Heart left ventricle (tissue), 16 donors: ENCODE measurements at regions of chr2 and their contacts with region 1.

Region 1: GRCh38 chr2:19347619-19348562 is 10.5 kb downstream of the OSR1 start:
- DNase-seq: peak; percentile 91 to 96 (median 95)
- ATAC-seq: peak; percentile 96 to 98 (median 98)
- H3K4me3 ChIP-seq: peak overlapping the region; percentile 62 to 96 (median 81)
- H3K27ac ChIP-seq: peak overlapping the region; percentile 78 to 99 (median 94)
- H3K4me1 ChIP-seq: peaks cover 0 to 31% (median 14%) of the 10 kb centered on the region in 12 donors
- H3K27me3 ChIP-seq: peaks cover 0 to 34% (median 7%) of the 10 kb centered on the region in 9 donors
- CTCF ChIP-seq: no peak
- POLR2A ChIP-seq: peak; percentile 64 to 96

Region 2: DNA sequence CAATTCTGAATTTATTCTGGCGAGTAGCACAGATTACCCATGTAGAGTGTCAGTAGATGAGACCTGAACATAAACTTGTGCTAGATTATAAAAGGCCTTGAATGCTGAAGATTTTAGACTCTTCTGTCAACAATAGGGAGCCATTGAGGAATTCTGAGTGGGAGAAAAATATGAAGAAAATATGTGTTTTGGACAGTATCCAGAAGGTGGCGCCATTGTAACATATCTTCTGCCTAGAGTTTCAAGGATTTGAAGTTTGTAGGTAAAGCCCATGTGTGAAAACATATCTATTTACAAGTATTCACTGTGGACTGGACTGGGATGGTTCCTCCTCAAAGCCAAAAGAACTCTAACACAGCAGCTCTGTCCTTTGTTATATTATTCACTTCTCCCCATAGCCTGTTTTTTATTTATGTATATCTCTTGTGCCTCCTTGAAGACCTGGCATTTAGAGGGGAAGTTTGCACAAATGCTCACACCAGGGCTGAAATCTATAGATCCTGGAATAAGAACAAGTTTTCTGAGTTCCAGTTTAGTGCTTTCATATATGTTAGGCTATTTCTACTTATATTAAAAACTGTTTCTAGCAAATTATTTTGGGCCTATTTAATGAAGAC is 912.4 kb before region 1 on chr2:
- intact Hi-C with region 1: loop called in 2 of 10 experiments (anchors 5 to 10 kb)
- DNase-seq: no peak
- ATAC-seq: peak in 2 of 4 donors; percentile 37 to 38
- H3K4me3 ChIP-seq: no peak overlapping the region
- H3K27ac ChIP-seq: no peak overlapping the region
- H3K4me1 ChIP-seq: peaks cover 0 to 16% (median 0%) of the 10 kb centered on the region in 12 donors
- H3K27me3 ChIP-seq: no peaks in the 10 kb centered on the region
- CTCF ChIP-seq: peak in 11 of 12 donors; percentile 38 to 71 (median 57)
- POLR2A ChIP-seq: no peak

Region 3: GRCh38 chr2:18855027-18855426 is 492.9 kb before region 1 on chr2:
- intact Hi-C with region 1: no loop called
- DNase-seq: no peak
- ATAC-seq: no peak
- H3K4me3 ChIP-seq: no peak overlapping the region
- H3K27ac ChIP-seq: no peak overlapping the region
- H3K4me1 ChIP-seq: no peaks in the 10 kb centered on the region
- H3K27me3 ChIP-seq: no peaks in the 10 kb centered on the region
- CTCF ChIP-seq: peak in 7 of 12 donors; percentile 7 to 34 (median 27)
- POLR2A ChIP-seq: no peak

Region 4: DNA sequence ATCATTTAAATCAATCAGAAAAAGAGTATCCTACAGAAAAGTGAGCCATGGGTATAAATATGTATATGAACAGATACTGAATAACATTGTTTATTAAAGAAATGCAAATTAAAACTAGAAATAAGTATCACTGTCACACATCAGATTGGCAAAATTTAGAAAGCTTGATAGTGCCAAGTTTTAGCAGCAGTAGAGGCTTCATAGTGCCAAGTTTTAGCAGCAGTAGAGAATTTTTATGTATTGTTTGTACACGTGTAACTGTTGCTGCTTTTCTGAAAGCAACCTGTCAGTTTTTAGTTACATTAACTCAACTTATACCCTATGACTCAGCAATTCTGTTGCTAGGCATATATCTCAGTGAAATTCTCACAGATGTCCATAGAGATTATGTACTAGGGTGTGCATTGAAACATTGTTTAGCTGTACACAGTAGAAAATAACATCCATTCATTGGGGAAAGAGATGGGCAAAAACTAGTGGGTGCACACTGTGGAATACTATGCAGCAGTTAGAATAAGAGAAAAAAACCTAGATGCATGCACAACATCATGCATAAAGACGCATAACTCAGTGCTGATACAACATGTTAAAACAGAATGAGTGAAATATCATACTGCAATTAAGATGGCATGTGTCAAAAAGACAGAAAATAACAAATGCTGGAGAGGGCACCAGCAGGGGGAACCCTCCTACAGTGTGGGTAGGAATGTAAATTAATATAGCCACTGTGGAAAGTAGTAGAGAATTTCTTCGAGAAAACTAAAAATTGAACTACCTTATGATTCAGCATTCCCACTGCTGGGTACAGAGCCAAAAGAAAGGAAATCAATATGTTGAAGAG is 464.1 kb before region 1 on chr2:
- intact Hi-C with region 1: loop called in 1 of 10 experiments (anchors 10 kb)
- DNase-seq: no peak
- ATAC-seq: no peak
- H3K4me3 ChIP-seq: no peak overlapping the region
- H3K27ac ChIP-seq: no peak overlapping the region
- H3K4me1 ChIP-seq: peaks cover 0 to 5% (median 0%) of the 10 kb centered on the region in 12 donors
- H3K27me3 ChIP-seq: no peaks in the 10 kb centered on the region
- CTCF ChIP-seq: peak in 8 of 12 donors; percentile 16 to 34 (median 26)
- POLR2A ChIP-seq: no peak

Region 5: GRCh38 chr2:18987592-18988073 is 360.3 kb before region 1 on chr2:
- intact Hi-C with region 1: loop called in 2 of 10 experiments (anchors 10 kb)
- DNase-seq: peak; percentile 71 to 82 (median 80)
- ATAC-seq: peak in 2 of 4 donors; percentile 57 to 72
- H3K4me3 ChIP-seq: no peak overlapping the region
- H3K27ac ChIP-seq: peak overlapping the region in 1 of 12 donors; percentile 14
- H3K4me1 ChIP-seq: peaks cover 0 to 25% (median 4%) of the 10 kb centered on the region in 12 donors
- H3K27me3 ChIP-seq: no peaks in the 10 kb centered on the region
- CTCF ChIP-seq: peak in 8 of 12 donors; percentile 5 to 56 (median 46)
- POLR2A ChIP-seq: no peak

Region 6: DNA sequence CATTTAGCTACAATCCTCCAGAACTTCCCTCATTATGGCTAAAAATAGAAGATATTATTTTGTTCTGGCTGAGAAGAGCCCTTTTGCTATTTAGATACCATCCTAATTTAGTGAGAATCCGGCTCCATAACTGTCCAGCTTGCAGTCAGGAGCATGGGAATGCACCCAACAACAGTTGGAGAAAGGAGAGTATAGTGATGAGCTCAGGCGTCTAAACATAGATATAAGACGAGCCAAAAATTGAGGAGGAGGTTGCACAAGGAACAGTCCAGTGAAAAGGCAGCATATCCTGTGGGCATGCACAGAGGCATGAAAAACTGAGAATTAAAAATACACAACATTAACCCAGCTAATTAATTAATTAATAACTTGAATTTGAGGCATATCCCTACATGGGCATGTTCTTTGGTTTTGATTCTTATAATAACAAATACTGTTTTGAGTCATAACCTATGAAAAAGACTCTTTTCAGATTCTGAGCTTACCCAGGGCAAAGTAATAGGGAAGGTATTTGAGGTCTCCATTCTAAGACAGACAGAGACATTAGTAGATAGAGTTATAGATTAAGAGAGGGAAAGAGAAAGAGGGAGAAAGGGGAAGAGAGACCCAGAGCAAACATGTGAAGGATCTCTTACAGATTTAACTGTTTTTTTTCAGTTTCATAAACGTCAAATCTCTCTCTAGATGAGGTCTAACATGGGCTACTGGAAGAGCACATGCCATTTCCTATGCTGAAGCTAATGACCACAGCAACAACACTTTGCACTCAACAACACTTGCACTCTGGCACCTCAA is 300.7 kb before region 1 on chr2:
- intact Hi-C with region 1: loop called in 2 of 10 experiments (anchors 5 to 10 kb)
- DNase-seq: peak in 3 of 5 donors; percentile 39 to 53 (median 40)
- ATAC-seq: peak; percentile 92 to 97 (median 97)
- H3K4me3 ChIP-seq: no peak overlapping the region
- H3K27ac ChIP-seq: peak overlapping the region in 7 of 12 donors; percentile 3 to 55 (median 38)
- H3K4me1 ChIP-seq: peaks cover 0 to 41% (median 13%) of the 10 kb centered on the region in 12 donors
- H3K27me3 ChIP-seq: no peaks in the 10 kb centered on the region
- CTCF ChIP-seq: no peak
- POLR2A ChIP-seq: no peak